Spleen (tissue), 13 donors: ENCODE measurements at regions of chr14 and their contacts with region 1.

Region 1: GRCh38 chr14:39174560-39175444 is at the start of gene PNN:
- DNase-seq: peak; percentile 98
- H3K4me3 ChIP-seq: peak within 1 kb of the TSS; percentile 82 to 99 (median 88)
- H3K27ac ChIP-seq: peak within 1 kb of the TSS; percentile 88 to 98 (median 96)
- H3K4me1 ChIP-seq: peaks cover 17 to 60% (median 38%) of the 10 kb centered on the region in 6 donors
- H3K27me3 ChIP-seq: no peaks in the 10 kb centered on the region
- CTCF ChIP-seq: peak in 4 of 11 experiments; percentile 31 to 49 (median 42)
- POLR2A ChIP-seq: peak; percentile 67 to 85 (median 85)
- total RNA-seq, gene PNN: 43.8 to 79.7 (median 66.6) TPM

Region 2: DNA sequence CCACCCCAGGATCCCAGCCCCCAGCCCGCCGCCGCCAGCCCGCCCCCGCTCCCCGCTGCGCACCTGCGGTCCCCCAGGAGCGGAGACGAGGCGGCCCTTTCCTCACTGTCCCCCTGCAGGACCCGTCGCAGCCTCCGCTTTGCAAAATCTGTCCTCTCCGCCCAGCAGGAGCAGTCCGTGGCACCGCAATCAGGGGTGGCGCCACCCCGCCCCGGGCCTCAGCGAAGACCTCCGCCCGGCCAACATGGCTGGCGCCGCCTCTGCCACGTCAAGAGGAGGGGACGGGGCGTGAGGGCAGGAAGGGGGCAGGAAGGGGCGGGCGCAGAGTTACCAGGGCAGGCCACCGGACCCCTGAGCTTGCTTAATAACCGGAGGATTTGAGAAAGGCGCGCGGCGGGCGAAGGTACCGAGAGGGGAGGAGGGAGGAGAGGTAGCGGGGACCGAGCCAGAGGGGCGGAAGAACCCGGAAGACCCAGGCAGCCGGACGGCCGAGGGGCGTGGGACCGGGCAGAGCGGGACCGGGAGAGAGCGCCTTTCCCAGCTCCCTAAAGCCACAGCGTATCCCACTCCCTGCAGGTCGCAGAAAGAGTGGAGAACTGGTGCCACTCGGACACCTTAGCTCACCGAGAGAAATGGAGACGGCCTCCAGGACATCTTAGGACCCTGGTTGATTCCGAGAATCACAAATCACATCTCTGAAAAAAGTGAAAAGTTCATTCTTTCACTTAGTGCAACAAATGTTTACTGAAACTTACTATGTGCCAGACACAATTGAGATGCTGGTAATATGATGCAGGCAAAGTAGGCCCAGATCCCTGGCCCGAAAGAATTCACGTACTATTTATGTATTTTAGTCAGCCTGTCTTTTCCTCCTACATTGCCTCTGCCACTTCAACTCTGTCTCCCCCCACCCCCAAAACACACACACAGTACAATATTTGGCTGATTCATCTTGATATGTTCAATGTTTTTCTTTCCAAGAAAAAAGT is 71.5 kb before region 1 on chr14 and contains the start of gene SEC23A:
- intact Hi-C with region 1: loop called (anchors 5 kb)
- DNase-seq: peak; percentile 98
- H3K4me3 ChIP-seq: peak within 1 kb of the TSS; percentile 61 to 81 (median 74)
- H3K27ac ChIP-seq: peak within 1 kb of the TSS; percentile 86 to 97 (median 94)
- H3K4me1 ChIP-seq: peaks cover 0 to 58% (median 41%) of the 10 kb centered on the region in 6 donors
- H3K27me3 ChIP-seq: no peaks in the 10 kb centered on the region
- CTCF ChIP-seq: peak in 1 of 11 experiments; percentile 7
- POLR2A ChIP-seq: peak in 2 of 3 donors; percentile 63 to 84
- total RNA-seq, gene SEC23A: 50.0 to 87.5 (median 63.8) TPM

Region 3: DNA sequence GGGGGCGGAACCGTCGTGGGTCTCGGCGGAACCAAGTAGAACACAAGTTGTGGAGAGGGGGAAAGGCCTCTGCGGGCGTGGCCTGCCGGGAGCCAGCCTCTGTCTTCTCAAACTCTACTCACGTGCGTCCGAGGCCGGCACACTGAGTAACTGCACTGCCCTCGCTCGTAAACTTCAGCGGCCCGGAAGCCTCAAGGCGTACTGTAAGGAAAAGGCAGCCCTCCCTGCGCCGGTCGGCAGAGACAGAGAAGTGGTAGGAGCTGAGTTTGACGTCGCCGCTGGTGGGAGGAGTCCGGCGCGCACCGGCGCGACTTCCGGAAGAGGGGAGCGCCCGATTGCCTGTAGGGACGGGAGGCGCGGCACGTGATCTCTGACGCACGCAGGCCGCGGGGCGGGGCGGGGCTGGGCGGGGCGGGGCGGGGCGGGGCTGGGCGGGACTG is 257.4 kb after region 1 on chr14 and contains the start of gene FBXO33:
- intact Hi-C with region 1: loop called (anchors 5 kb)
- DNase-seq: peak; percentile 99
- H3K4me3 ChIP-seq: peak within 1 kb of the TSS; percentile 59 to 97 (median 87)
- H3K27ac ChIP-seq: peak within 1 kb of the TSS; percentile 97 to 100 (median 99)
- H3K4me1 ChIP-seq: peaks cover 28 to 52% (median 45%) of the 10 kb centered on the region in 6 donors
- H3K27me3 ChIP-seq: no peaks in the 10 kb centered on the region
- CTCF ChIP-seq: peak in 1 of 11 experiments; percentile 25
- POLR2A ChIP-seq: peak in 1 of 3 donors; percentile 50
- total RNA-seq, gene FBXO33: 11.2 to 24.1 (median 16.2) TPM